ENCODE measurements at regions of chr1 and their contacts with region 1.

Region 1: DNA sequence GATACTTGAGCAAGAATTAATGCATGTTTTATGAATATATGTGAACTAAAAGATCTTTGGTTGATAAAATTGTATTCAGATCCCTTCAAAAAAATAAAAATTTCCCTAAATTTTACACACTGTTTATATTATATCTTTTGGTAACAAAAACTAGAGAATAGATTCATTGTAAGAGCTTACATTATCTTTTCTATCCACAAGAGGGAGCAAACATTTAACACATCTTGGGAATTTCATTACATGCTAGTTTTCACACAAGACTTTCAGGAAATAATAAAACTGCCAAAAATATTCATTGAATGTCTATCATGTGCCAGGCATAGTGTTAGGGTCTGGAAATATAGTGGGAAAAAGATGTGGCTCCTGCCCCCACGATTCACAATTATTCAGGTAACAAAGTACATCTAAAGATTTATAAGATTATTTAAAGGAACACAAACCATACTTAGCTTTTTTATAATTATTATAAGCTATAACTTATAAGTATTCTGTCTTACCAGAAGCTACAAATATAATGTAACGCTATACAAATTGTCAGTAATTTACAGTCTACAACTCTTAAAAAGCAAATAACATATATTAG is 30.6 kb downstream of the FAF1 start:
- DNase-seq: no peak
- ATAC-seq: no peak
- H3K4me3 Mint-ChIP-seq: no peak overlapping the region
- H3K27ac Mint-ChIP-seq: no peak overlapping the region
- H3K4me1 Mint-ChIP-seq: peaks cover 10% of the 10 kb centered on the region
- H3K27me3 Mint-ChIP-seq: no peaks in the 10 kb centered on the region

Region 2: DNA sequence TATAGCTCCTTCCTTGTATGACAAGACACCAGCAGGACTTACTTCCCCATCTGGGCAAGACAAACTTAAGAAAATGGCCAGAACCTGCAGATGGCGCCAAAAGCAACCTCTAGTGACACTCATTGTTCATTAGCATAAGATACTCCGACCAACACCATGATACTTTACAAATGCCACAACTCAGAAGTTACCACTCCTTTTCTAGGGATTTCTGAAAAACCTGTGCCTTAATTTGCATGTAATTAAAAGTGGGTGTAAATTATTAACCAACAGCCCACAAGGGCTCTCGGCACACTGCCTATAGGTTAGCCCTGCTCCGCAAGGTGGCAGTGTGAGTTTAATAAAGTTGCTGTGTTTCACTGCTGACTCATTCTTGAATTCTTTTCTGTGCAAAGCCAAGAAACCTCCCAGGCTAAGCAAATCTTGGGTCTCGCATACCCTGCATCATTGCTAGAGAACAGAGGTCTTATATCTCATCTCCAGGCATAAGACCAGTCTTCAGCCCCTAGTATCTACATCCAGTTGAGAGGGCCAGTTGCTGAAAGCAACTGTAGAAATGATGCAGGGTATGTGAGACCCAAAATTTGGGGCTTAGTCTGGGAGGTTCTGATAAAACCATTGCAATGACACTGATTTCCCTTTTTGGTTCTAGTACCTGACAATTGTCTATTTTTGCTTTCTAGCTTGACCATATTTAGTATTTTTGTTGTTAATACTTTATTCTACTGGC is 55.8 kb before region 1 on chr1:
- CTCF ChIA-PET with region 1: interaction called, 12 read pairs
- POLR2A ChIA-PET with region 1: no interaction called
- DNase-seq: peak; percentile 79
- ATAC-seq: peak; percentile 73
- H3K4me3 Mint-ChIP-seq: no peak overlapping the region
- H3K27ac Mint-ChIP-seq: no peak overlapping the region
- H3K4me1 Mint-ChIP-seq: no peaks in the 10 kb centered on the region
- H3K27me3 Mint-ChIP-seq: no peaks in the 10 kb centered on the region

Region 3: DNA sequence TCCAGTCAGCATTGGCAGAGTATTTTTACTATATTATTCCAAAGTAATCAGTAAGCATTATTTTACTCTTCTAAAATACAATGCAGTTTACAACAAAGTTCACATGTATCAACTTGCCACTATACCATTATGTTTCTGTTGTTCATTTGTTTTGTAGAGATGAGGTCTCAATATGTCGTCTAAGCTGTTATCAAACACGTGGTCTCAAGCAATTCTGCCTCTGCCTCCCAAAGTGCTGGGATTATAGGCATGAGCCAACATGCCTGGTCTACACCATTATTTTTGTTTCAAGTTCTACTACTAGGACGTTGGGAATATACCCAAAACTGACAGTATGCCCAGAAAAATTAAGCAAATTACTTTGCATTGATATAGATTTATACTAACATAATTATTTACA is 10.8 kb after region 1 on chr1:
- CTCF ChIA-PET with region 1: interaction called, 10 read pairs
- POLR2A ChIA-PET with region 1: no interaction called
- DNase-seq: no peak
- ATAC-seq: no peak
- H3K4me3 Mint-ChIP-seq: no peak overlapping the region
- H3K27ac Mint-ChIP-seq: no peak overlapping the region
- H3K4me1 Mint-ChIP-seq: peaks cover 10% of the 10 kb centered on the region
- H3K27me3 Mint-ChIP-seq: no peaks in the 10 kb centered on the region

Region 4: DNA sequence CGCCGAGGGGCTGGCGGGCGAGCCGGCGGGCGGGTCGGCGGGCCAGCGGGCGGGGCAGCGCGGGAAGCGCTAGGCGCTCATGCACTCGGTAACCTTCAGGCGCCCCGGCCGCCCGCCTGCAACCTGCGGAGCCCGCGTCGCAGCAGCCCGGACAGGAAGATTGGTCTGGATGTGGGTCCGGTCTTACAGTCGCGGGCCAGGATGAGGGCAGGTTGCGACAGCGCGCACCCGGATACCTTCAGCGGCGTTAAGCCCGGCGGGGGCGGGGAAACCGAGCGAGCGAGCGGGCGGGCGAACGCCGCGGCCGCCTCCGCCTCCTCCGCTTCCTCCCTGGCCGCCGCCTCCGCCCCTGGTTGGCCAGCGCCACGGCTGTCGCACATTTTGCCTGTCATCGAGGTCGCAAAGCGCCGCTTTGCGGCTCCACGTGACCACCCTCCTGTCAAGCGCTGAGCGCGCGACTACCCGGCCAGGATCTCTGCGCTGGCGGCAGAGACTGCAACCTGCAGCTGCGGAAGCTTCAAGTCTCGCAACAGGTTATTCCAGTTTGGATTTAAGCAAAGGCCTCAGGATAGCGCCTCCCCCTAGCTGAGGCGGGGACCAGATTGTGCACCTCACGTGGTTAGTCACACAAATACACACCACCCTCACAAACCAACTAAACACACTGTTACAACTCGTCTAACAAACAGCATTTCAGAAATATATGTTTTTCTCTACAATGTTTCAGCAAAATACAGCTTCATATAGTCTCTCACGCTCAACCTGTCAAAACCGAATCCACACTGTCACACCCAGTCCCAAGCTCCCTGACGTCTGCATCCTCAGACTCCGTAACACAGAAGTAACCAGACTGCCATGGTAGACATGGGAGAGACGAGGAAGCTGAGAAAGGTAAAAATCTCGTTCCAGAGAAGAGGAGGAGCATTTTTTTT is 30.7 kb after region 1 on chr1 and contains the start of gene FAF1:
- CTCF ChIA-PET with region 1: interaction called, 19 read pairs
- POLR2A ChIA-PET with region 1: interaction called, 3 read pairs
- DNase-seq: peak; percentile 98
- ATAC-seq: peak; percentile 95
- H3K4me3 Mint-ChIP-seq: peak within 1 kb of the TSS; percentile 83
- H3K27ac Mint-ChIP-seq: peak within 1 kb of the TSS; percentile 90
- H3K4me1 Mint-ChIP-seq: peaks cover 26% of the 10 kb centered on the region
- H3K27me3 Mint-ChIP-seq: no peaks in the 10 kb centered on the region
- total RNA-seq, gene FAF1: 95.6 to 104 TPM

Region 5: DNA sequence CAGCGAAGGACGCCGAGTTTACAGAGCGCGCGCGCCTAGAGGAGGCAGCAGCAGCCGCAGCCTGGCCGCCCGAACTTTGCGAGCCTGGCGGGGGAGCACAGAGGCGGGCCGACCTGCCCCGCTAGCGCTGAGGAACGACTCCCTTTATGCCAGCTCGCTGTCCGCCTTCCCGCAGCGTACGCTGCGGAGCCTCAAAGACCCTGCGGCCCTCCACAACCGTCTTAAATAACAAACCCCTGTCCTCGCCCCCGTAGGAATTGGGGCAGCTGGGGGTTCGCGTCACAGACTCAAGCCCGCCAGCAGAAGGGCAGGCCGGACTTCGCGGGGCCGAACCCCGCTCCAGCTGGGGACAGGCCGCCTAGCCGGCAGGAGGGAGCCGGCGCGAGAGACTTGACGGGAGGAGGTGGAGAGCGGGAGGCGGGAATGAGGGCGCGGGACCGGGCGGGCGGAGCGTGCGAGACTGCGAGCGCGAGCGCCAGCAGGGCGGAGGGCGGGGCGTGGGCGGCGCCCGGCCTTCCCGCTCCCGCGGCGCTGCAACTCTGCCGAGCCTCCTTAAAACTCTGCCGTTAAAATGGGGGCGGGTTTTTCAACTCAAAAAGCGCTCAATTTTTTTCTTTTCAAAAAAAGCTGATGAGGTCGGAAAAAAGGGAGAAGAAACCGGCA is 38.8 kb after region 1 on chr1:
- CTCF ChIA-PET with region 1: interaction called, 21 read pairs
- POLR2A ChIA-PET with region 1: interaction called, 9 read pairs
- DNase-seq: peak; percentile 89
- ATAC-seq: peak; percentile 82
- H3K4me3 Mint-ChIP-seq: peak overlapping the region; percentile 98
- H3K27ac Mint-ChIP-seq: peak overlapping the region; percentile 100
- H3K4me1 Mint-ChIP-seq: peaks cover 24% of the 10 kb centered on the region
- H3K27me3 Mint-ChIP-seq: no peaks in the 10 kb centered on the region

Region 6: DNA sequence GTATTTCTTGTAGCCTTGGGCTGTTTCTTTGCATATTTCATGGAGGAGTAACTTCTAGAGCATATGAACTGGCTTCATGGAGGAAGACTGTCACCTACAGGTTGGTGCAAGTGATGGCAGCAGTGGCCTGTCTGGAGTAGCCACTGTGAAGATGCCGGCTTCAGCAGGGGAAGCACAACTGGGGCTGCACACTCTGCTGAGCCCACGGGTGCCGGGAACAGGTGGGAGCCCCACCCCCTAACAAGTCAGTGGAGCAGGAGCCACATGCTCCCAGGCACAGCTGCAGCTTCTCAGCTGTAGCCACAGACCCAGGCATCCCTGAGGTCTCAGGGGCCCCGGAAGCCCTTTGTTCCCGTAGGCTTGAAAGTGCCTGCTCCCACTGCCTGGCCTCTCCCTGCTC is 129.4 kb after region 1 on chr1:
- CTCF ChIA-PET with region 1: no interaction called
- POLR2A ChIA-PET with region 1: no interaction called
- DNase-seq: no peak
- ATAC-seq: no peak
- H3K4me3 Mint-ChIP-seq: no peak overlapping the region
- H3K27ac Mint-ChIP-seq: no peak overlapping the region
- H3K4me1 Mint-ChIP-seq: no peaks in the 10 kb centered on the region
- H3K27me3 Mint-ChIP-seq: peaks cover 3% of the 10 kb centered on the region

Measured in activated CD8-positive, alpha-beta T cell treated with anti-CD3 and anti-CD28 coated beads, Interleukin-2, amount 10 ng/mL, durations not matched to agents 7 days and 5 days (primary cell).